ENCODE measurements at regions of chr12 and their contacts with region 1.

Region 1: GRCh38 chr12:131894313-131894860 is at the start of gene ULK1:
- DNase-seq: peak; percentile 95
- H3K4me3 ChIP-seq: peak within 1 kb of the TSS; percentile 60 to 90 (median 76)
- H3K27ac ChIP-seq: peak within 1 kb of the TSS; percentile 93 to 98 (median 94)
- H3K4me1 ChIP-seq: peaks cover 9 to 22% (median 15%) of the 10 kb centered on the region in 4 donors
- H3K27me3 ChIP-seq: no peaks in the 10 kb centered on the region
- CTCF ChIP-seq: no peak
- EP300 ChIP-seq: no peak
- POLR2A ChIP-seq: peak; percentile 86
- total RNA-seq, gene ULK1: 17.5 to 140 (median 28.0) TPM

Region 2: DNA sequence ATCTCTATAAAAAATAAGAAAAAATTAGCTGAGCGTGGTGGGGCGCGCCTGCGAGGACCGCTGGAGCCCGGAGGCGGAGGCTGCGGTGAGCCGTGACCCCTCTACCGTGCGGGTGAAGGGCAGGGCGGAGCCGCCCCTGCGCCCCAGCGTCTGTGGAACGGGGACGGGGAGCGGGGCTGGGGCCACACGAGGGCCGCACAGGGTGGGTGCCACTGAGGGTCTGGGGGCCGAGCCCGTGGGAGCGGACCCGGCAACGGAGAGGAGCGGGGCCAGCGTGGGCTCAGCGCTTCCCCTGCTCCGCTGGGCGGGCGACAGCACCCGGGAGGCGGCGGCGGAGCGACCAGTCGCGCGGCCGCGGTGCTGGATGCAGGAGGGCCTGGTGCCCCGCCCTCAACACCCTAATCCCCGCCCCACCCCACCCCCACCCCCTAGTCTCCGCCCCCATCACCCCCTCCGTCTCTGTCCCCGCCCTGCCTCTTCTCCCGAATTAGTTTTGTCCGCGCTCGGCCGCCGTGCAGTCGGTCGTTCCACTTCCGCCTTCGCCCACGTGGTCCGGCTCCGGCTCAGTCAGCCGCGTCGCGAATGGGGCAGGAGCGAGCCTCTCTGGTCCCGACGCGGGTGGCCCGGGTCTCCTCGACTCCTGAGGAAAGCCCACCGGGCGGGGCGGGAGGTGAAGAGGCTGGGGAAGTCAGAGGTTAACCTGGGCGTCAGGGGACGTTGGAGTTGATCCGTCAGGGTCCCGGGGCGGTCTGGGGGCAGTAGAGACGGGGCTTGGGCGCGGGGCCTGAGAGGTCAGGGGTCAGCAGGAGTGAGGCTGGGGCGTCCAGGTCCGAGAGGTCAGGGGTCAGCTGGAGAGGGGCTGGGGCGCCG is 34.6 kb after region 1 on chr12 and contains the start of gene PUS1:
- in situ Hi-C with region 1: no loop called
- intact Hi-C with region 1: loop called (anchors 2 kb)
- DNase-seq: peak; percentile 96
- H3K4me3 ChIP-seq: peak within 1 kb of the TSS; percentile 74 to 93 (median 90)
- H3K27ac ChIP-seq: peak within 1 kb of the TSS; percentile 92 to 93 (median 92)
- H3K4me1 ChIP-seq: peaks cover 0 to 24% (median 9%) of the 10 kb centered on the region in 4 donors
- H3K27me3 ChIP-seq: no peaks in the 10 kb centered on the region
- CTCF ChIP-seq: no peak
- EP300 ChIP-seq: no peak
- POLR2A ChIP-seq: peak; percentile 78
- total RNA-seq, gene PUS1: 11.9 to 48.8 (median 23.1) TPM

Region 3: GRCh38 chr12:131949431-131950181 is 55.2 kb after region 1 on chr12 and contains the start of gene EP400:
- in situ Hi-C with region 1: no loop called
- intact Hi-C with region 1: loop called (anchors 1 kb)
- DNase-seq: peak; percentile 98
- H3K4me3 ChIP-seq: peak within 1 kb of the TSS; percentile 86 to 100 (median 94)
- H3K27ac ChIP-seq: peak within 1 kb of the TSS; percentile 81 to 93 (median 91)
- H3K4me1 ChIP-seq: peaks cover 7 to 31% (median 18%) of the 10 kb centered on the region in 4 donors
- H3K27me3 ChIP-seq: no peaks in the 10 kb centered on the region
- CTCF ChIP-seq: peak in 4 of 5 experiments; percentile 21 to 65 (median 38)
- EP300 ChIP-seq: no peak
- POLR2A ChIP-seq: peak; percentile 39
- total RNA-seq, gene EP400: 25.4 to 67.3 (median 37.5) TPM

Measured in transverse colon (tissue), 4 donors.